ENCODE measurements at regions of chr1 and their contacts with region 1.

Region 1: DNA sequence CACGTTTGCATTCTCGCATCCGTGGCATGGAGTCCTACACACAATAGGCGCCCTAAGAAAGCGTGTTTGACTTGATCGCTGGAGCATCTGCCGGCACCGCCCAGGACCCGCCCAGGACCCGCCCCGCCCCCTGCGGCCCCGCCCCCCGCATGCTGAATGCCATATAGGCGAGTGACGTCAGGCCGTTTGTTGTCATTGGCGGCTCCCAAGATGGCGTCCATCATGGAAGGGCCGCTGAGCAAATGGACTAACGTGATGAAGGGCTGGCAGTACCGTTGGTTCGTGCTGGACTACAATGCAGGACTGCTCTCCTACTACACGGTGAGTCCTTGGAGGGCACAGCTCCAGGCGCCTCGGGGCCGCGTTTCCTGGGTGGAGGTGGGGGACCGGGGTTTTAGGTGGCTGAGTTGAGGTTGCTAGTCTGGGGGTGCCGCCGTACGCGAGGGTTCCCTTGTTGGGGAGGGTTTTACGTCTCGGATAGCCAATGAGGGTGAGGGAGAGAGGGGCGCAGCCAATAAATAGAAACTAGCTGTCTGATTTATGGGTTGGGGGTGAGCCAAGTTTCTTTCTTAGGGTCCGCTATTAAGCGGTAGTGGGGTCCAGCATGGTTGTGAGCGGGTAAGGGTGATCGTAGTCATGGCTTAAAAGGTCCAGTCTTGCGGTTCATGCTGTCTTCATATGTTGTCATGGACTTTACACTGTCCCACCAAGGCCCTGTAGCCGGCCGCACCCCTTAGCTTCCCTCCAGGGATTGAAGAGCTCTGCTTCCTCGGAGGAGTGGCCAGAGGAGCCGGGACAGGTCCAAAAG is at the start of gene OSBPL9:
- DNase-seq: peak; percentile 64
- ATAC-seq: peak; percentile 95
- H3K4me3 Mint-ChIP-seq: peak within 1 kb of the TSS; percentile 99
- H3K27ac Mint-ChIP-seq: peak within 1 kb of the TSS; percentile 94
- H3K4me1 Mint-ChIP-seq: peaks cover 32% of the 10 kb centered on the region
- H3K27me3 Mint-ChIP-seq: no peaks in the 10 kb centered on the region
- CTCF ChIP-seq: no peak
- total RNA-seq, gene OSBPL9: 58.2 and 63.7 TPM in 2 replicates

Region 2: DNA sequence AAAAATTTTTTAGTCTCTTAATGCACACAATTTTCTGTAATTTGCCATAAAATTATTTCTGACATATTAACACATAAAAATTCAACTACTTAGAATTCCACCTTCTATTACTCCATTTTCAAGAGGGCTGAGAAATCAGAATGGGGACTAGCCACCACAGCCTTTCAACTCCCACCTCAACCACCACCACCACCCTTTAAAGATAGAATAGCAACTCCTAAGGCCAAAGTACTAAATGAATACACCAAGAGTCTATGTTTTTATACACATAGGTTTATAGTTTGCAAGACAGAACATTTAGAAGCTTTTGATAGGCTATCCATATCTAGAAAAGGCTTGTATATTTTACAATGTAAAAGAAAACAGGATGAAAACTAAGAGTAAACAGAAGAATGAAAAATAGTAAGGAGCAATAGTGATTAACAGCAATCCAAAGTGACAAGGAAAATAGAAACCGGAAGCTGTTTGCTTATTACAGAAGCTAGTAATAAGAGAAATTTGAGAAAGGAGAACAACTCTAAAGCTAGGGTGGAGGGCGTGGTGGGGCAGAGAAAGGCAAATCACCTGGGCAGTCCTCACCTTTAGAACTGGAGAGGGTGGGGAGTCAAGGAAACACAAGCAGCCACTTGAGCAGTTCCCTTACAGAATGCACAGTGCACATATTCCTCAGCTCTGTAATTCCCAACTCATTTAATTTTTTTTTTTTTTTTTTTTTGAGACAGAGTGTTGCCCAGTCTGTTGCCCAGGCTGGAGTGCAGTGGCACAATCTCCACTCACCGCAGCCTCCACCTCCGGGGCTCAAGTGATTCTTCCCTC is 125.7 kb before region 1 on chr1:
- CTCF ChIA-PET with region 1: no interaction called
- POLR2A ChIA-PET with region 1: no interaction called
- intact Hi-C with region 1: loop called (anchors 5 kb)
- DNase-seq: no peak
- ATAC-seq: peak; percentile 65
- H3K4me3 Mint-ChIP-seq: peak overlapping the region; percentile 68
- H3K27ac Mint-ChIP-seq: peak overlapping the region; percentile 85
- H3K4me1 Mint-ChIP-seq: peaks cover 69% of the 10 kb centered on the region
- H3K27me3 Mint-ChIP-seq: no peaks in the 10 kb centered on the region
- CTCF ChIP-seq: no peak

Region 3: GRCh38 chr1:51569284-51570062 is 47.6 kb before region 1 on chr1:
- CTCF ChIA-PET with region 1: no interaction called
- POLR2A ChIA-PET with region 1: interaction called, 7 read pairs
- intact Hi-C with region 1: loop called (anchors 1 kb)
- DNase-seq: no peak
- ATAC-seq: peak; percentile 53
- H3K4me3 Mint-ChIP-seq: peak overlapping the region; percentile 78
- H3K27ac Mint-ChIP-seq: peak overlapping the region; percentile 95
- H3K4me1 Mint-ChIP-seq: peaks cover 54% of the 10 kb centered on the region
- H3K27me3 Mint-ChIP-seq: no peaks in the 10 kb centered on the region
- CTCF ChIP-seq: no peak

Region 4: GRCh38 chr1:51627678-51628077 is 10.6 kb after region 1 on chr1:
- CTCF ChIA-PET with region 1: no interaction called
- POLR2A ChIA-PET with region 1: interaction called, 16 read pairs
- intact Hi-C with region 1: no loop called
- DNase-seq: no peak
- ATAC-seq: no peak
- H3K4me3 Mint-ChIP-seq: no peak overlapping the region
- H3K27ac Mint-ChIP-seq: no peak overlapping the region
- H3K4me1 Mint-ChIP-seq: peaks cover 9% of the 10 kb centered on the region
- H3K27me3 Mint-ChIP-seq: no peaks in the 10 kb centered on the region
- CTCF ChIP-seq: no peak

Region 5: GRCh38 chr1:52365746-52366516 is 748.8 kb after region 1 on chr1 and contains the start of gene CC2D1B:
- CTCF ChIA-PET with region 1: no interaction called
- POLR2A ChIA-PET with region 1: no interaction called
- intact Hi-C with region 1: loop called (anchors 5 kb)
- DNase-seq: peak; percentile 100
- ATAC-seq: peak; percentile 95
- H3K4me3 Mint-ChIP-seq: peak within 1 kb of the TSS; percentile 94
- H3K27ac Mint-ChIP-seq: peak within 1 kb of the TSS; percentile 88
- H3K4me1 Mint-ChIP-seq: peaks cover 30% of the 10 kb centered on the region
- H3K27me3 Mint-ChIP-seq: peaks cover 2% of the 10 kb centered on the region
- CTCF ChIP-seq: no peak
- total RNA-seq, gene CC2D1B: 51.3 and 66.4 TPM in 2 replicates